Activated CD8-positive, alpha-beta T cell treated with anti-CD3 and anti-CD28 coated beads for 36 hours (primary cell): ENCODE measurements at regions of chr16 and their contacts with region 1.

Region 1: GRCh38 chr16:70454222-70455034 is at the start of gene FCSK:
- DNase-seq: peak; percentile 71
- ATAC-seq: peak; percentile 93
- H3K4me3 Mint-ChIP-seq: peak within 1 kb of the TSS; percentile 86
- H3K27ac Mint-ChIP-seq: peak within 1 kb of the TSS; percentile 91
- H3K4me1 Mint-ChIP-seq: peaks cover 17% of the 10 kb centered on the region
- H3K27me3 Mint-ChIP-seq: no peaks in the 10 kb centered on the region
- CTCF ChIP-seq: no peak
- total RNA-seq, gene FCSK: 11.0 to 11.1 TPM

Region 2: DNA sequence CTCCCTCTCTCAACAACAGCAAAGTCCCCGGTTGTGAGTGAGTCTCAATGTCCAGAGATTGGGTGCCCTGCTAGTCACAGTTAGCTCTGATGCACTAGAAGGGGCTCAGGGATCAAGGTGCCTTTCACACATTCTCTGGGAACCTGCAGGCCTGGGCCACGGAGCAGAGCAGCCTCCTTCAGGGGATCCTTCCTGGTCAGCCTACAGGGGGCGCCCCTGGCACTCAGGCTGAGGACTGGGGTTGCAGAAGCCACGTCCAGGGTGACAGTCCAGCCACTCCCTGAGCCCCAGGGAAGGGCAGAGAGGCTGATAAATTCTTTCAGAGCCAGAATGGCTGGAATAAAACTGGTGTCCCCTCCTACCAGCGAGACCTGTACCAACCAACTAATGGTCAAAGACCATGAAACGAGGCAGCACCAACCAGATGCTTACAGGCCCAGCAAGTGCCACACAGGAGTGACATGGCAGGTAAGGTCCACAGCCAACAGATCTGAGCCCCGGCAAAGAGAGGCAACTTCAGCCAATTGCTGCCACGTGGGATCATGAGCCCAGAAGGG is 59.0 kb before region 1 on chr16:
- CTCF ChIA-PET with region 1: interaction called, 12 read pairs
- POLR2A ChIA-PET with region 1: interaction called, 4 read pairs
- intact Hi-C with region 1: no loop called
- DNase-seq: peak; percentile 73
- ATAC-seq: peak; percentile 93
- H3K4me3 Mint-ChIP-seq: no peak overlapping the region
- H3K27ac Mint-ChIP-seq: no peak overlapping the region
- H3K4me1 Mint-ChIP-seq: peaks cover 4% of the 10 kb centered on the region
- H3K27me3 Mint-ChIP-seq: no peaks in the 10 kb centered on the region
- CTCF ChIP-seq: peak; percentile 85

Region 3: DNA sequence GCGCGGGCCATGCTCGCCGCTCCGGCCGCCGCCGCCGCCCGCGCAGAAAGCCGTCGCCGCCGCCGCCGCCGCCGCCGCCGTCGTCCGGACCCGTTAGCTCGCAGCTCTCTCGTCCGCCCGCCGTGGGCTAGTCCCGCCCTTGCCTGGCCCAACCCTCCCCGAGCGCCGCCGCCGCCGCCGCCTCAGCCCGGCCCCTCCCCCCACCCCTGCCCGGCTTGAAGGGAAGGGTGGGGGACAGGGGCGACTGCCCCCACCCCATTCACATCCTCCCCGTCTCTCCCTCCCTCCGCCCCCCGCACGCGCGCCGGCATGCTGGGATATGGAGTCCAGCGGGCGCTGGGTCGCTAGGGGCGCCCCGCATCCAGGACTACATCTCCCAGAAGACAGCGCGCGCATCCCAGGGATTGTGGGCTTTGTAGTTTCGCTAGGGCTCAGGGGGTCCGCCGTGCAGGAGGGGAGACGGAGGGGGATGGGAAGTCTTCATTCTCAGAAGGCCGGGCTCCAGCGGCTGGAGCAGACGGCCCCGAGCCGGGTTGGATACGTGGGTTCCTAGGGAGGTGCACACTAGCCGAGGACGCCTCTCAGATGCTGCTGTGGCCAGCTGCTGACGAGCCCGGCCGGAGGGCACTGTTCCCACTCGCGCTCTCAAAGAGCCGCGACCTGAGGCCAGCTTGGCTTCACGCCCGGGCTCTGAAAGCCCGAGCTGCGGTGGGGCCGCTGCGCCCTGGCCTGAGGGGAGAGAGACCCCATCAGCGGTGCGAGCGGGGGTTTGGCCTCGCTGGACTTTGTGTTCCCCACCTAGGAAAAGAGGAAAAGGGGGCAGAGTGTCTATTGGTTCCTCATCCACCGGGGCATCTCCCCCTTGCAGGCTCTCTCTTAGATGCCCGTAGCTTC is 15.2 kb before region 1 on chr16 and contains the start of gene ST3GAL2:
- CTCF ChIA-PET with region 1: interaction called, 4 read pairs
- POLR2A ChIA-PET with region 1: interaction called, 10 read pairs
- intact Hi-C with region 1: no loop called
- DNase-seq: peak; percentile 96
- ATAC-seq: peak; percentile 97
- H3K4me3 Mint-ChIP-seq: peak within 1 kb of the TSS; percentile 95
- H3K27ac Mint-ChIP-seq: peak within 1 kb of the TSS; percentile 91
- H3K4me1 Mint-ChIP-seq: peaks cover 37% of the 10 kb centered on the region
- H3K27me3 Mint-ChIP-seq: no peaks in the 10 kb centered on the region
- CTCF ChIP-seq: no peak
- total RNA-seq, gene ST3GAL2: 13.2 to 19.0 TPM